ENCODE measurements at regions of chr16 and their contacts with region 1.

Region 1: DNA sequence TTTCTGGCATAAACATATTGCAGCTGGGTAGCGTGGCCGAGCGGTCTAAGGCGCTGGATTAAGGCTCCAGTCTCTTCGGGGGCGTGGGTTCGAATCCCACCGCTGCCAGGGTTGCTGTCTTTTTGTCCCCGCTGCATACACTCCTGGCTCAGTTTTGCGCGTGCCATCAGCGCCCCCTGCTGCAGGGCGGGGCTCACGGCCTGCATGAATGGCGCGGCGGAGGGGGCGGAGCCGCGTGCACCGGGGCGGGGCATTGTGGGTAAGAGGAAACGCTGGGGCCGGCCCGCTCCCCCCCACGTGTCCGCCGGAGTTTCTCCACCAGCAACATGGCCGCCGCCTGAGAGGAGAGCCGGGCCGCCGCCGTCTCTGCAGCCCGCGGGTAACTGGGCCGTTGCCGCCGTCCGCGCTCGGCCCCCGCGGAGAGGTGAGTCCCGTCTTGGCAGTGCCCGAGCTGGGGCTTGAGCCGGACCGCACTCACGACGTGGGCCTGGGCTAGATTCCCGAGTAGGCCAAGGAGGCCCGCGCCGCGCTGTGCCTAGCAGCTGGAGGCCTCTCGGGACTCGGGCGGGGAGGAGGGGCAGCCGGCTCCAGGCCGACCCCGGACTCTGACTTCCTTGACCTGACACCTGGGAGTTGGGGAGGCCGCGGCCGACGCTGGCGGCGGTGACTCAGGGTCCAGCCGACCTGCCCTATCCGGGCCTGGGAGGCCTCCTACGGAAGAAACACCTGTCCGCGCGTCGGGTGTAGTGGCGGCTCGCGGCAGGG is at the start of gene POLR3E:
- DNase-seq: peak; percentile 82
- H3K4me3 ChIP-seq: peak within 1 kb of the TSS; percentile 97
- H3K27me3 ChIP-seq: no peaks in the 10 kb centered on the region
- CTCF ChIP-seq: peak; percentile 89
- polyA plus RNA-seq, gene POLR3E: 36.6 and 60.9 TPM in 2 replicates

Region 2: GRCh38 chr16:22198547-22199293 is 98.6 kb before region 1 on chr16:
- CTCF ChIA-PET with region 1: interaction called, 21 read pairs
- POLR2A ChIA-PET with region 1: no interaction called
- DNase-seq: no peak
- H3K4me3 ChIP-seq: no peak overlapping the region
- H3K27me3 ChIP-seq: no peaks in the 10 kb centered on the region
- CTCF ChIP-seq: no peak

Region 3: GRCh38 chr16:22206013-22206841 is 91.1 kb before region 1 on chr16 and contains the start of gene EEF2K:
- CTCF ChIA-PET with region 1: interaction called, 17 read pairs
- POLR2A ChIA-PET with region 1: no interaction called
- DNase-seq: peak; percentile 68
- H3K4me3 ChIP-seq: peak within 1 kb of the TSS; percentile 73
- H3K27me3 ChIP-seq: no peaks in the 10 kb centered on the region
- CTCF ChIP-seq: peak; percentile 72
- polyA plus RNA-seq, gene EEF2K: 8.7 and 10.9 TPM in 2 replicates

Measured in BJ (cell line).